MCF 10A (cell line): ENCODE measurements at regions of chr3 and their contacts with region 1.

Region 1: GRCh38 chr3:190701096-190701532 is 161.4 kb downstream of the GMNC start:
- DNase-seq: peak; percentile 86
- H3K4me3 Mint-ChIP-seq: no peak overlapping the region
- H3K27ac Mint-ChIP-seq: no peak overlapping the region
- H3K4me1 Mint-ChIP-seq: peaks cover 14% of the 10 kb centered on the region
- H3K27me3 Mint-ChIP-seq: no peaks in the 10 kb centered on the region
- CTCF ChIP-seq: peak; percentile 75

Region 2: GRCh38 chr3:189961525-189962161 is 739.5 kb before region 1 on chr3:
- CTCF ChIA-PET with region 1: interaction called, 17 read pairs
- POLR2A ChIA-PET with region 1: no interaction called
- intact Hi-C with region 1: loop called (anchors 1 kb)
- DNase-seq: peak; percentile 88
- H3K4me3 Mint-ChIP-seq: no peak overlapping the region
- H3K27ac Mint-ChIP-seq: no peak overlapping the region
- H3K4me1 Mint-ChIP-seq: peaks cover 7% of the 10 kb centered on the region
- H3K27me3 Mint-ChIP-seq: no peaks in the 10 kb centered on the region
- CTCF ChIP-seq: peak; percentile 91

Region 3: GRCh38 chr3:189981668-189982067 is 719.4 kb before region 1 on chr3:
- CTCF ChIA-PET with region 1: no interaction called
- POLR2A ChIA-PET with region 1: no interaction called
- intact Hi-C with region 1: no loop called
- DNase-seq: peak; percentile 88
- H3K4me3 Mint-ChIP-seq: no peak overlapping the region
- H3K27ac Mint-ChIP-seq: peak overlapping the region; percentile 16
- H3K4me1 Mint-ChIP-seq: peaks cover 14% of the 10 kb centered on the region
- H3K27me3 Mint-ChIP-seq: no peaks in the 10 kb centered on the region
- CTCF ChIP-seq: no peak

Region 4: DNA sequence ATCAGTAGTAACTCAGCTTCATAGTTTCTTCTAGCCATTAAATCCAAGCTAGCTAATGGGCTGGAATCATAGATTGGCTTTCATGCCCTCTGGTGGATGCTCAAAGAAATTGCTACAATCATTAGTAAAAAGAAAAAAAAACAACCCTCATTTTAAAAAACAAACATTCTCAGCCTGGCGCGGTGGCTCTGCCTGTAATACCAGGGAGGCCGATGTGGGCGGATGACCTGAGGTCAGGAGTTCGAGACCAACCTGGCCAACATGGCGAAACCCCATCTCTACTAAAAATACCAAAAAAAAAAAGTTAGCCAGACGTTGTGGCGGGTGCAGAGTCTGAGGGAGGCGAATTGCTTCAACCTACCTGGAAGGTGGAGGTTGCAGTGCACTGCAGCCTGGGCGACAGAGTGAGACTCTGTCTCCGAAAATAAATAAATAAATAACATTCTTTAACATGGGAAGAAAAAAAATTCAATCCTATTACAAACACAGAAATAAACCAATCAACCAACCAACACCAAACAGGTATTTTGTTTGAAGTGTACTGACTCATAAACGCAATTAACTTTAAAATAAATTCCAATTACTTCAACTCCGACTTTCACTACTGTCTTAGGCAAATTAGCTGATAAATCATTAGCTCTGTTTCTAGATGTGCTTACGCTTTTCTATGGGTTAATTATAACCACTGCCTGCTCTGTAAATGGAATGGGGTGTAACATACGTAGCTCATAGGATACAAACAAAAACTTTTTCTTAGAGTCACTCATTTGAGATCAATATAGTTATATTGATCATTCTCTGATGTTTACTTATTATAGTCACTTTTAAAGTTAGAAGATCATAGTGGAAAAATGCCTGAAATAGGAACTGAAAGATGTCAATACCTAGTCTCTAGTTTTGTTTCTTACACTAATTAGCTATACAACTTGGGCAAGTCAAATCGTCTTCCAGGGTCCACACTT is 276.4 kb before region 1 on chr3:
- CTCF ChIA-PET with region 1: interaction called, 17 read pairs
- POLR2A ChIA-PET with region 1: no interaction called
- intact Hi-C with region 1: no loop called
- DNase-seq: peak; percentile 83
- H3K4me3 Mint-ChIP-seq: no peak overlapping the region
- H3K27ac Mint-ChIP-seq: peak overlapping the region; percentile 71
- H3K4me1 Mint-ChIP-seq: no peaks in the 10 kb centered on the region
- H3K27me3 Mint-ChIP-seq: no peaks in the 10 kb centered on the region
- CTCF ChIP-seq: peak; percentile 64

Region 5: DNA sequence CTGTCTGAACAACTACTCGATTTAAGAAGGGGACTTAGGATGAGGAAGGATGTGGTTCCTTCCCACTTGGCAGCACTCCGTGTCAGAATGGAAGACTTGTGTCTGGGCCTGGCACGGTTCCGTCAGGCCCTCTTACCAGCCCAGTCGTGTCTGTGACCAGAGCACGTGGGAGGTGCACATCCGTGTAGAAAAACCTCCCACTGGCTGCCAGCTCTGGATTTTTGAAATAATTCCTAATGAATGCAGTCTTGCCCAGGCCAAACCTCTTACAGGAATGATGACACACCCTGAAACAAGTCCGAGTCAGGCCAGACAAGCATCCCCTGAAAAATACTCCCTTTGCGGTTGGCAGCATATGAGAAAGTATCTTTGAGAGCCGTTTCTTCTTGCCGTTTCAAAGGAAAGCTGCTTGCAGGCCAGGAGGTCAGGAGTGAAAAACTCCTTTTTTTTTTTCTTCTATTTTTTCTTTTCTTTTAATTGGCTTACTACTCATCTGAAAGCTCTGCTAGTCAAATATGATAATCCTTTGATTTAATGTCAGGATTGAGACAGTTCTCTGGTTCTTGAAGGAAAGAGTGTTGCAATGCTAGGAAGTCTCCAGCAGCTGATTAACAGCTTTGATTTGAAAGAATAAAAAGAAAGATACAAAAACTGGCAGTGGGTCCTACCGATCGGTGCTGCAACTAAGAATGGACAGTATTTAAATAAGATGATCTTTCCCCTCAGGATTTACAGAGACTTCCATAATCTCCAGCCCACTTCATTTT is 167.4 kb before region 1 on chr3:
- CTCF ChIA-PET with region 1: interaction called, 4 read pairs
- POLR2A ChIA-PET with region 1: interaction called, 16 read pairs
- intact Hi-C with region 1: loop called (anchors 5 kb)
- DNase-seq: peak; percentile 94
- H3K4me3 Mint-ChIP-seq: peak overlapping the region; percentile 69
- H3K27ac Mint-ChIP-seq: peak overlapping the region; percentile 96
- H3K4me1 Mint-ChIP-seq: peaks cover 55% of the 10 kb centered on the region
- H3K27me3 Mint-ChIP-seq: no peaks in the 10 kb centered on the region
- CTCF ChIP-seq: no peak

Region 6: DNA sequence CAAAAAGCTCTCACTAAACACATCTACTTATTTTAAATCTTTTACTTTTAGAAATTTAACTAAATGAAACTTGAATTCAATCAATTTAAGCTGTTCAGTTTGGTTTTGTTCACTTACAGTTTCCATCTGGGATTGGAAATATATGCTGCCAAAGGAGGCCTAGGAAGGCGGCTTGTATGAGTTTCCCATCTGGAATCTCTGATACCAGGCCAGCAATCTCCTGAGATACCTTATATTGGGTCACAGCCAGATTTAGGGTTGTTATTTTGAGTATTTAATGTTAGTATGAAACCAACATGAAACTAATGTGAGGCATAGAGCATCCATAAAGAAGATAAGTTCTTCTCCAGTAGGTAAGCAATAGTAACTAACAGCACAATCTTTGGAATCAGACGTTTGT is 66.7 kb after region 1 on chr3:
- CTCF ChIA-PET with region 1: no interaction called
- POLR2A ChIA-PET with region 1: no interaction called
- intact Hi-C with region 1: no loop called
- DNase-seq: no peak
- H3K4me3 Mint-ChIP-seq: no peak overlapping the region
- H3K27ac Mint-ChIP-seq: no peak overlapping the region
- H3K4me1 Mint-ChIP-seq: no peaks in the 10 kb centered on the region
- H3K27me3 Mint-ChIP-seq: no peaks in the 10 kb centered on the region
- CTCF ChIP-seq: no peak

Region 7: GRCh38 chr3:190862209-190863118 is 161.3 kb after region 1 on chr3 and contains the start of gene GMNC:
- CTCF ChIA-PET with region 1: interaction called, 7 read pairs
- POLR2A ChIA-PET with region 1: no interaction called
- intact Hi-C with region 1: loop called (anchors 1 kb)
- DNase-seq: peak; percentile 82
- H3K4me3 Mint-ChIP-seq: peak within 1 kb of the TSS; percentile 71
- H3K27ac Mint-ChIP-seq: peak within 1 kb of the TSS; percentile 43
- H3K4me1 Mint-ChIP-seq: peaks cover 12% of the 10 kb centered on the region
- H3K27me3 Mint-ChIP-seq: no peaks in the 10 kb centered on the region
- CTCF ChIP-seq: no peak
- total RNA-seq, gene GMNC: not detected in 2 replicates

Region 8: GRCh38 chr3:191220908-191221307 is 519.8 kb after region 1 on chr3:
- CTCF ChIA-PET with region 1: no interaction called
- POLR2A ChIA-PET with region 1: no interaction called
- intact Hi-C with region 1: loop called (anchors 10 kb)
- DNase-seq: peak; percentile 15
- H3K4me3 Mint-ChIP-seq: no peak overlapping the region
- H3K27ac Mint-ChIP-seq: no peak overlapping the region
- H3K4me1 Mint-ChIP-seq: no peaks in the 10 kb centered on the region
- H3K27me3 Mint-ChIP-seq: no peaks in the 10 kb centered on the region
- CTCF ChIP-seq: no peak